Right ventricle myocardium inferior (tissue), 1 donor: ENCODE measurements at regions of chr11 and their contacts with region 1.

Region 1: GRCh38 chr11:73184953-73185671 is 33.0 kb upstream of the P2RY2 start:
- DNase-seq: peak; percentile 82
- ATAC-seq: peak; percentile 27

Region 2: GRCh38 chr11:73218106-73218829 is 33.2 kb after region 1 on chr11 and contains the start of gene P2RY2:
- intact Hi-C with region 1: loop called (anchors 2 kb)
- DNase-seq: peak; percentile 95
- ATAC-seq: peak; percentile 90
- total RNA-seq, gene P2RY2: 20.0 TPM

Region 3: GRCh38 chr11:73288873-73289707 is 104.0 kb after region 1 on chr11:
- intact Hi-C with region 1: loop called (anchors 2 kb)
- DNase-seq: peak; percentile 88
- ATAC-seq: peak; percentile 85